Activated CD4-positive, alpha-beta T cell treated with anti-CD3 and anti-CD28 coated beads, Interleukin-2, amount 10 ng/mL, durations not matched to agents 7 days and 5 days (primary cell): ENCODE measurements at regions of chr15 and their contacts with region 1.

Region 1: GRCh38 chr15:58517682-58518525 is 86.1 kb downstream of the LIPC start:
- DNase-seq: peak; percentile 14
- H3K4me3 Mint-ChIP-seq: no peak overlapping the region
- H3K27ac Mint-ChIP-seq: peak overlapping the region; percentile 83
- H3K4me1 Mint-ChIP-seq: peaks cover 72% of the 10 kb centered on the region
- H3K27me3 Mint-ChIP-seq: no peaks in the 10 kb centered on the region

Region 2: DNA sequence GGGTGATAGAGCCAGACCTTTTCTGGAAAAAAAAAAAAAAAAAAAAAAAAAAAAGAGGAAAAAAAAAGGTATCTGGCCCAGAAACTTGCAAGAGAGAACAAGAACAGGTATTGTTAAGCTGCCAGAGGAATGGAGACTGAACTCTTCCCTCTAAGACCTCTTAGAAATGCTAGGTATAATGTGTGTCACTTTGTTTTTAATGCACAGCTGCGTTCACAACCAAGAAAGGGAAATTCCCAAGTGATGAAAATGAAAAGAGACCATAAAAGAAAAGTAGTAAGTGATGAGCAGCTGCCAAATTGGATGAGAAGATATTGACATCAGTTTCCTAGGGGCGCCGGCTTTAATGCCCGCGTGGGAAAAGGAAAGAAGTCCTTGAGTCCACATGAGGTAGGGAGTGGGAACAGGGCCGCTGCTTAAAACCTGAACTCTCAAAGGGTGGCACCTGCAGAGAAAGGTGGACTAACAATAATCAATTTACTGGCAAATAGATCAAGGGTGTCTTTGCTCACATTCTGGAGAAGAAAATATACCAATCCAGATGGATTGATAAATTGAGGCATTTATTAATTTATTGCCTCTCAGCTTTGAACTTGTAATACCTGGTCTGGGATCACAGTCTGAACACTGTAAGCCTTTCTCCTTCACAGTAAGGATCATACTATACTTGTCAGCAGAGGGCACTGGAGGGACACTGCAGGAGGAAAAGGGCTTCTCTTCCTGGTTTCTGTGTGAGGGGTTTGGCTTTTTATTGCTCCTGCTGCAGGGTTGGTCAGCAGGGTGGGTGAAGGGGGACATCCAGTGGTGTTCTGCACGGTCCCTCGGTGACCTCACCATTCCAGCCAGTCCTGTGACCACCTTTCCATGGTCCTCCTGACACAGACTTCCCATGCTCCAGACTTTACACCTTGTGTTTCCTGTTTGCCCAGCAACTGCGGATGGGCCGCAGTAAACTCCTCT is 248.2 kb before region 1 on chr15:
- CTCF ChIA-PET with region 1: no interaction called
- POLR2A ChIA-PET with region 1: interaction called, 11 read pairs
- DNase-seq: peak; percentile 63
- H3K4me3 Mint-ChIP-seq: no peak overlapping the region
- H3K27ac Mint-ChIP-seq: no peak overlapping the region
- H3K4me1 Mint-ChIP-seq: peaks cover 10% of the 10 kb centered on the region
- H3K27me3 Mint-ChIP-seq: no peaks in the 10 kb centered on the region

Region 3: DNA sequence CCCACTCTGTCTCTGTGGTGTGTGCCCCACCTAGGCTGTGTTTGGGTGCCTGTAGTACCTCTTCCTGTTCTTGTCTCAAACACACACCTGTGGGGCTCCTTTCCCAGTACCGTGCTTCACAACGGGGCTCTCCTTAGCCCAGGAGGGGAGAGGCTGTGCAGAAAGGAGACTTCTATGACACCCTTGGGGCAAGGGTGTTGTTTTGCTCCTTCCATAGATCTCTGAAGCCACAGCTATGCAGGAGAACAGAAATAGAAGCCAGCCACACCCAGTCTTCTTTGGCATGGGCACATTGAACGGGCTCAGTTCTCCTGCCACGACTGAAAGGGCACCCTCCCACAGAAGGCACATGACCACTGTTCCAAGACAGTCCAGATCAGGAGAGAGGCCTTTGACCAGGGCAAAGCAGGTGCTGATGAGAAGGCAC is 11.8 kb before region 1 on chr15:
- CTCF ChIA-PET with region 1: interaction called, 20 read pairs
- POLR2A ChIA-PET with region 1: no interaction called
- DNase-seq: no peak
- H3K4me3 Mint-ChIP-seq: no peak overlapping the region
- H3K27ac Mint-ChIP-seq: peak overlapping the region; percentile 84
- H3K4me1 Mint-ChIP-seq: peaks cover 26% of the 10 kb centered on the region
- H3K27me3 Mint-ChIP-seq: peaks cover 4% of the 10 kb centered on the region